Sciatic nerve (tissue), 2 donors: ENCODE measurements at regions of chr3 and their contacts with region 1.

Region 1: DNA sequence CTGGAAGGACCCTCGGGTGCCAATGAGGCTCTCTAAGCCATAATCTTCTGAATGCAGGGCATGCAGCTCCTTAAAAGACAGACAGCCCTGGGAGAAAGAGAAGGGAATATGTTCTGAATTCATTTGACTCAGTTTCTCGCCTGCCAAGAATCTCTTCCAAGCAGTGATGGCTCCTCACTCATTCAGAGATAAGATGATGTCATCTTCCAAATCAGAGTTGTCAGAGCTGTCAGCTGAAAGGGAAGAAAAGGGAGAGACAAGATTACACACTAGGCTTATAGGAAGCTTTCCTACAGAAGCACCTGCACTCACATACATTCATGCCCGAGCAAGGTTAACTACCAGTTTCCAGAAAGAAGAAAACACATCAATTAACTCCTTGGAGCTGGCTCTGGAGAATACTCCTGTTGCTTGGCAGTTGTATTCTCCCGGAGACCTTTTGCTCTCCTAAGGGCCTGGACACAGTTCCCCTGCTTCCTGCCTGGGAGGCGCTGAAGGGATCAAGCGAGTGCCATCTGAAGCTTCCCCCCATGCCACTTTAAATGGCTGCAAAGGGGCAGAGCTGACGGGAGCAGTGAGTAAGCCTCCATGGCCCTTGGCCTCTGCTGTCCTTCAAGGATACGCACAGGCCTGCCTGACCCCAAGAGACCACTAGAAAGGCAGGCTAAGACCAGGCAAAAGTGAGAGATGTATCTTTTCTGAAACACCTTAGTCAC is 7.7 kb downstream of the RBM15B start:
- DNase-seq: no peak
- ATAC-seq: no peak

Region 2: DNA sequence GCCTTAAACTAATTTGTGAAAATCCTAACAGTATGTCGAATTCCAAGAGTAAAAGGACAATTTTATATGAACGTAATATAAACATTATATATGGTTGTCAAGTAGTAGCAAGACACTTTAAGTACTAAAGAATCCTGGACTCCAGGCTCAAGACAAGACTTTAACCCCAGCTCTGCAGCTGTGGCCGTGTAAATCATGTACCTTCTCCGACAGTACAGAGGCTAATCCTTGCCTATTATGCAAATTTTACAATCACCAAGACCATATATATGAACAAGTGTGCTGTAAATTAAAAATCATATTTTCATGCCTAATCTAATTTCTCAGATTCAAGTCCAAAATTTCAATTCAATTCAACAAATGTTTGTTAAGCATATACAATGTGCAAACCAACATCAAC is 28.2 kb after region 1 on chr3:
- intact Hi-C with region 1: loop called (anchors 1 kb)
- DNase-seq: no peak
- ATAC-seq: no peak

Region 3: DNA sequence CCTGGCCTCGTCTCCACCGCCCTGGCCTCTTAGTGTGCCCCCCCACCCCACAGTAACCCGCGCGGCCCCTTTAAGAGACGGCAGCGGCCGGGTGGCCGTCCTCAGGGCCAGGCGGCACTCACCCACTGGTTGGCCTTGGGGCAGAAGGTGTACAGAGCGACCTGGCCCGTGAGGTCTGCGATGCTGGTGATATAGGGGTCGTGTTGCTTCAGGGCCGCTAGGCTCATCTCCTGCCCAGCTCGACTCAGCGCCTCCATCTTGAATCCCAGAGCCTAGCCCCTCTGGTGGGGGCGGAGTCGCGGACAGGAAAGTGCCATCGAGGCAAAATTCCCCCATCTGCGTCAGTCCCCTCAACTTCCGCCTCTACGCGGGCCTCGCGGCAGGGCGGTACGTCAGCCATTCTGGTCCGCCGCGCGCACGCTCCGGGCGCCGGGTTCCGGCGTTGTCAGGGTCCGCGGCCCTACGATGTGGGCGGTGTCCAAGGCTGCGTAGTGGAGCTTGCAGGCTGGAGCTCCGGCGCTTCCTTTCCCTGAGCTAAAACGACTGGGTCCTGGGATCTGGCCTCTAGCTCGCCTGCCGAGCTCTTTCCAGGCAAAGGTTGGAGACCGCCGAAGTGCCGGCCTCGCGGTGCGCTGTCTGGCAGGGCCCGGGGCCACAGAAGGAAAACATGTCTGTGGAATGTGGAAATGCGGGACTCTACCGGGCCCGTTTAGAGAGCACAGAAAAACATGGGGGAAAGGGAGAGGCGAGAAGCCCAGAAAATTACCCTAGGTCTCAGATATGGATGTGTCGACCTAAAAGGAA is 1948.7 kb after region 1 on chr3 and contains the start of gene DCP1A:
- intact Hi-C with region 1: no loop called
- DNase-seq: peak; percentile 97
- ATAC-seq: peak; percentile 99
- total RNA-seq, gene DCP1A: 30.8 TPM